ENCODE measurements at regions of chr19 and their contacts with region 1.

Region 1: DNA sequence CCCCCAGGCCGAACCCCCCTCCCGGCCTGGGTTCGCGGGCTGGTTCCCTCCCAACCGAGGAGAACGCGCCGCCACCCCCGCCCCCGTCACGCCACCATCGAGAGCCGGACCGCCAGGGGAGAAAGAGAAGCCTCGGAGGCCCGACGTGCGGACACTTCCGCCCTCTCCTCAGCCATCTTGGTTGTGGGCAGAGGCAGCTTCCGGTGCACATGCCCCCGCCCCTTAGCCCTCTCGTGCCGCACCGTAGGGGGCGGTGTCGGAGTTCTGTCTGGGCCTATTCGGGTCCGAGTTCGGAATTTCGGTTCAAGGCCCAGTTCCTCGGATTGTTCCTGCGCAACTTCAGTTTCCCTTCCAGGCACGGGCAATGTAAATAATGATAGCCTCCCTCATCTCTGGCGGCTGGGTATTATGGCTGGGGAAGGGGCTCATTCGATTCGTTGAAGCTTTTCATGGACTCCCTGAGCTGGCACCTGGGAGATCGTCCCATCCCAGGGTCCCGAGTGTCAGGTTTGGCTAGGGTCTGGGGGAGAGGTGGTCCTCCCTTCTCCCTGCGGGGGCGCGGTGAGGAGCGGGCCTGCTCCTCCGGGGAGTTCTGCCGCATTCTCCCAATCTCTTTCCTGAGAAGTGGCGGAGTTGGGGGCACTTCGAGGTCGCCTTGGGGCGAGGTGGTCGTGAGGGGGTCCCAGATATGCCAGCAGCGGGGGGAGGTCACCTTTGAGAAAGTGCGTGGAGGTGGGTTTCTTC is at the starts of genes IER2 and STX10:
- DNase-seq: peak; percentile 96
- ATAC-seq: peak; percentile 52
- H3K4me3 Mint-ChIP-seq: peak within 1 kb of the TSS; percentile 87
- H3K27ac Mint-ChIP-seq: peak within 1 kb of the TSS; percentile 97
- H3K4me1 Mint-ChIP-seq: peaks cover 18% of the 10 kb centered on the region
- H3K27me3 Mint-ChIP-seq: no peaks in the 10 kb centered on the region
- total RNA-seq, gene IER2: 109 to 118 TPM
- total RNA-seq, gene STX10: 64.8 to 71.4 TPM

Region 2: GRCh38 chr19:12789904-12790619 is 360.3 kb before region 1 on chr19:
- CTCF ChIA-PET with region 1: interaction called, 3 read pairs
- POLR2A ChIA-PET with region 1: interaction called, 6 read pairs
- intact Hi-C with region 1: loop called (anchors 1 to 5 kb)
- DNase-seq: peak; percentile 99
- ATAC-seq: peak; percentile 48
- H3K4me3 Mint-ChIP-seq: peak overlapping the region; percentile 92
- H3K27ac Mint-ChIP-seq: peak overlapping the region; percentile 98
- H3K4me1 Mint-ChIP-seq: peaks cover 28% of the 10 kb centered on the region
- H3K27me3 Mint-ChIP-seq: no peaks in the 10 kb centered on the region

Region 3: DNA sequence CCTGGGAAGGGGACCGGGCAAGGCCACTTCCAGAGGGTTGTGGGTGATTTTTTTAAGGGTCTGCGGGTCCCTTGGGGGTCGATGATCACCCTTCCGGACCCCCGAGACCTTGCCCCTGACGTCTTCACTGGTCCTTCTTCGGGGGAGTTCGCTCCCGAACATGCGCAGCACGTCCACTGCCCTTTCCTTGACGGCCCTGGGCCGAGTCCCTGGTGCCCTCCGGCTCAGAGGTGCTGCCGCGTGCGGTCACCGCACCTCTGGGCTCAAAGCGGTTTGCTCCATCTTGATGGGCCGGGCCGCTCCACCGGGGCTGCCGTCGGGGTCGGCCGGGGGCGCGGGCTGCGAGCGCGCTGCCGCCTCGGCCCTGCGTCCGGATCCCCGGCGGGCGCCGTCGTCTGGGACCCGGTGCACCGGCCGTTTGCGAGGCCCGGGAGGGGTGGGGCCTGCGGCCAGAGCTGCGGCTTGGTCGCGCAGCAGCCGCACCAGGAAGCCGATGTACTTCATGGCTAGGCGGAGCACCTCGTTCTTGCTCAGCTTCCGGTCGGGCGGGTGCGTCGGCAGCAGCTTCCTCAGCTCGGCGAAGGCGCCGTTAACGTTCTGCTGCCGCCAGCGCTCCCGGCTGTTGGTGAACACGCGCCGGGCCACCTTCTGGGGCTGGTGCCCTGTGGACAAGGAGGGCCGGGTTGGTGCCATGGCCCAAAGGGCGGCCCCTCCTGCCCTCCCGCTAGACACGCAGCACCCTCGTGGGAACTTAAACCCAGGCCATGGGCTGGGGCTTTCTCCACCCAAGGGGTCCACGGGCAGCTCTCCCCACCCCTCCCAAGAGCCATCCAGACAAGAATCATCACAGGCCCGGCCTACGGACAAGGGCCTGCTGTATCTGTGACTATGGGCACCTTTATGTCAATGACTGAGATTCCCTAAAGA is 51.0 kb before region 1 on chr19:
- CTCF ChIA-PET with region 1: interaction called, 6 read pairs
- POLR2A ChIA-PET with region 1: interaction called, 4 read pairs
- intact Hi-C with region 1: loop called (anchors 1 kb)
- DNase-seq: peak; percentile 89
- ATAC-seq: peak; percentile 61
- H3K4me3 Mint-ChIP-seq: peak overlapping the region; percentile 65
- H3K27ac Mint-ChIP-seq: peak overlapping the region; percentile 85
- H3K4me1 Mint-ChIP-seq: peaks cover 54% of the 10 kb centered on the region
- H3K27me3 Mint-ChIP-seq: peaks cover 32% of the 10 kb centered on the region

Region 4: GRCh38 chr19:13162518-13163314 is 12.4 kb after region 1 on chr19:
- CTCF ChIA-PET with region 1: interaction called, 12 read pairs
- POLR2A ChIA-PET with region 1: interaction called, 17 read pairs
- intact Hi-C with region 1: loop called (anchors 1 kb)
- DNase-seq: peak; percentile 96
- ATAC-seq: peak; percentile 56
- H3K4me3 Mint-ChIP-seq: peak overlapping the region; percentile 80
- H3K27ac Mint-ChIP-seq: peak overlapping the region; percentile 94
- H3K4me1 Mint-ChIP-seq: peaks cover 64% of the 10 kb centered on the region
- H3K27me3 Mint-ChIP-seq: no peaks in the 10 kb centered on the region

Region 5: DNA sequence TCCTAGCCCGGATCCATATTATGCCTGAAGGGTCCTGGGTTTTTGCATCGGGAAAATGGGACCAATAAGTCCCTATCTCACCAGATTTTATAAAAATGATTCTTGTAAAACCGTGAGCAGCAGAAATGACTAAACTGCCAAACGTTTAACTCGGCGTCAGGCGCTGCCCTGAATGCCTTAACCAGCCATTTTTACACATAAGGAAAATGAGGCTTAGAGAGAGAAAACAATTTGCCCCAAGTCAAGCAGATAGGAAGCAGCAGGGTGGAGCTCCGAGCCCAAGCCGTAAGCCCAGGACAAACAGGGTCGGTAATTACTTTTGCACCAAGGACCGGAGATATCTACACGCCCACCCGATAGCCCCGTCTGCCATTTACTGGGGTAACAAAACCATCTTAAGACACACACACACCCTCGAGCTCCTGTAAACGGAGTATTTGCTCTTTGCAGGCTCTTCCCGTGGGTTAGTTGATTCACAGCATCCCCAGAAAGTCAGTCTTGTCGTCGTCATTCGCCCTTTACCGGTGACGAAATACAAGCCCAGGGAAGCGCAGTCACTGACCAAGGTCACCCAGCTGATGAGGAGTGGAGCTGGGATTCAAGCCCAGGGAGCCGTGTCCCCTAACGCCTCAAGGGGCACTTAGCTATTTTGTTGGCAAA is 597.9 kb after region 1 on chr19:
- CTCF ChIA-PET with region 1: no interaction called
- POLR2A ChIA-PET with region 1: no interaction called
- intact Hi-C with region 1: loop called in 1 of 2 experiments (anchors 5 kb)
- DNase-seq: peak; percentile 50
- ATAC-seq: peak; percentile 2
- H3K4me3 Mint-ChIP-seq: peak overlapping the region; percentile 80
- H3K27ac Mint-ChIP-seq: peak overlapping the region; percentile 84
- H3K4me1 Mint-ChIP-seq: peaks cover 30% of the 10 kb centered on the region
- H3K27me3 Mint-ChIP-seq: no peaks in the 10 kb centered on the region

Region 6: DNA sequence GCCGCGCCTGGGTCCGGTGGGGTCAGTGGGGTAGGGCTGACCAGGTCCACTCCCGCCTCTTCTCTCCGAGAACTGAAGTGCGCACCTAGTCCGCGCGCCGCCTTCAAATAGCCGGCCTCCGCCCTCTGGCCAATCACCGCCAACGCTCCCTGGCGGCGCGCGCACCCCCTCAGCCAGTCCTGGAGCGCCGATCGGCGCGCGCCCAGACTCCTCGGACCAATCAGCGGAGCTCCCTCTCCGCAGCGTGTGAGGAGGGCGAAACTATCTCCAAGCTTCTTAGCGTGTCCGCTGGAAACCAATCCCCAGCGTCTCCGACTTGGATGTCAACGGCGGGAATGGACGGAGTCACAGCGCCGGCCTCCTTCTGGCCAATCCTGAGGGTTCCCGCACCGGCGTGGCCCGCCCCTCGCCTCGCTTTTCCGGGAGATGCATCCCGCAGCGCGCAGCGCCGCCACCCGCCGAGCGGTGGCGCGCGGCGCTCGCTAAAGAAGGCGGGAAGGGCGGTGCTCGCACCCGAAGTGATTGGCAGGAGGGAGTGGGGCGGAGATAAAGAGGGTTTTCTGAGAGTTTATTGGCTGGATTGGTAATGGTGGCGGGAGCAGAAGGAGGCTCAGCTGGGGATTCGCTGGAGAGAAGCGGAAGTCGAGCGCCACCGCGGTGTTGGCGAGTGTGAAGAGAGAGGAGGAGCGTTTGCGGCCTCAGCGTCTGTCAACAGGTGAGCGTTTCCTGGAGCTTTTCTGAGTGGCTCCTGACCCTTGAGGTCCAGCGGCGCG is 986.3 kb after region 1 on chr19 and contains the start of gene ASF1B:
- CTCF ChIA-PET with region 1: no interaction called
- POLR2A ChIA-PET with region 1: no interaction called
- intact Hi-C with region 1: loop called in 1 of 2 experiments (anchors 2 kb)
- DNase-seq: peak; percentile 99
- ATAC-seq: peak; percentile 88
- H3K4me3 Mint-ChIP-seq: peak within 1 kb of the TSS; percentile 88
- H3K27ac Mint-ChIP-seq: peak within 1 kb of the TSS; percentile 93
- H3K4me1 Mint-ChIP-seq: peaks cover 43% of the 10 kb centered on the region
- H3K27me3 Mint-ChIP-seq: no peaks in the 10 kb centered on the region
- total RNA-seq, gene ASF1B: 64.6 to 70.4 TPM